Naive thymus-derived CD4-positive, alpha-beta T cell (primary cell): ENCODE measurements at regions of chr15 and their contacts with region 1.

Region 1: GRCh38 chr15:76235186-76235826 is 76.0 kb downstream of the ETFA start:
- DNase-seq: peak in 6 of 9 donors; percentile 4 to 49 (median 28)
- ATAC-seq: peak; percentile 54
- H3K4me3 ChIP-seq: no peak overlapping the region
- H3K4me3 Mint-ChIP-seq: no peak overlapping the region
- H3K27ac ChIP-seq: no peak overlapping the region
- H3K27ac Mint-ChIP-seq: no peak overlapping the region
- H3K4me1 ChIP-seq: no peaks in the 10 kb centered on the region
- H3K4me1 Mint-ChIP-seq: peaks cover 0 to 3% (median 0%) of the 10 kb centered on the region in 7 donors
- H3K27me3 ChIP-seq: no peaks in the 10 kb centered on the region
- H3K27me3 Mint-ChIP-seq: no peaks in the 10 kb centered on the region

Region 2: DNA sequence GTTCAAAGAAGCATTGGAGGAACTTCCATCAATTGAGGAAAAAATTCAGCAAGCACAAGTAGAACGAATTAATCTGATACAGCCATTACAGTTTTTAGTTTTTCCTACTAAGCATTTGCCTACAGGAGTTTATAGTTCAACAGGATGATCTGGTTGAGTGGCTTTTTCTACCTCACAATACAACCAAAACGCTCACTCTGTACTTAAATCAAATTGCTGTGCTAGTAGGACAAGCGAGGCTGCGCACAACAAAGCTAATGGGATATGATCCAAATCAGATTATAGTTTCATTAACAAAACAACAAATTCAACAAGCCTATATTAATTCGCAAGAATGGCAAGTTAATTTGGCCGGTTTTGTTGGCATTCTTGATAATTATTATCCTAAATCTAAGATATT is 31.8 kb after region 1 on chr15:
- CTCF ChIA-PET with region 1: no interaction called
- POLR2A ChIA-PET with region 1: no interaction called
- intact Hi-C with region 1: no loop called
- DNase-seq: no peak
- ATAC-seq: no peak
- H3K4me3 ChIP-seq: no peak overlapping the region
- H3K4me3 Mint-ChIP-seq: no peak overlapping the region
- H3K27ac ChIP-seq: no peak overlapping the region
- H3K27ac Mint-ChIP-seq: no peak overlapping the region
- H3K4me1 ChIP-seq: no peaks in the 10 kb centered on the region
- H3K4me1 Mint-ChIP-seq: peaks cover 0 to 4% (median 0%) of the 10 kb centered on the region in 7 donors
- H3K27me3 ChIP-seq: no peaks in the 10 kb centered on the region
- H3K27me3 Mint-ChIP-seq: no peaks in the 10 kb centered on the region

Region 3: GRCh38 chr15:76285239-76285825 is 50.0 kb after region 1 on chr15:
- CTCF ChIA-PET with region 1: no interaction called
- POLR2A ChIA-PET with region 1: no interaction called
- intact Hi-C with region 1: loop called in 1 of 2 experiments (anchors 5 kb)
- DNase-seq: peak in 2 of 9 donors; percentile 2 to 9
- ATAC-seq: no peak
- H3K4me3 ChIP-seq: no peak overlapping the region
- H3K4me3 Mint-ChIP-seq: peak overlapping the region in 2 of 10 donors; percentile 69 to 82
- H3K27ac ChIP-seq: peak overlapping the region; percentile 69
- H3K27ac Mint-ChIP-seq: peak overlapping the region in 2 of 9 donors; percentile 93 to 94
- H3K4me1 ChIP-seq: peaks cover 11 to 27% of the 10 kb centered on the region in 2 donors
- H3K4me1 Mint-ChIP-seq: peaks cover 13 to 42% (median 31%) of the 10 kb centered on the region in 7 donors
- H3K27me3 ChIP-seq: no peaks in the 10 kb centered on the region
- H3K27me3 Mint-ChIP-seq: no peaks in the 10 kb centered on the region

Region 4: GRCh38 chr15:76336254-76337058 is 101.2 kb after region 1 on chr15 and contains the start of gene ISL2:
- CTCF ChIA-PET with region 1: no interaction called
- POLR2A ChIA-PET with region 1: no interaction called
- intact Hi-C with region 1: loop called in 1 of 2 experiments (anchors 5 kb)
- DNase-seq: peak in 2 of 9 donors; percentile 21 to 83
- ATAC-seq: peak; percentile 52
- H3K4me3 ChIP-seq: peak within 1 kb of the TSS; percentile 28
- H3K4me3 Mint-ChIP-seq: peak within 1 kb of the TSS; percentile 61 to 84 (median 76)
- H3K27ac ChIP-seq: no peak within 1 kb of the TSS
- H3K27ac Mint-ChIP-seq: peak within 1 kb of the TSS in 5 of 9 donors; percentile 5 to 77 (median 39)
- H3K4me1 ChIP-seq: peaks cover 32 to 59% of the 10 kb centered on the region in 2 donors
- H3K4me1 Mint-ChIP-seq: peaks cover 37 to 60% (median 48%) of the 10 kb centered on the region in 7 donors
- H3K27me3 ChIP-seq: peaks cover 11 to 47% of the 10 kb centered on the region in 2 donors
- H3K27me3 Mint-ChIP-seq: peaks cover 73 to 84% (median 75%) of the 10 kb centered on the region in 5 donors
- total RNA-seq, gene ISL2: 0.21 to 0.51 (median 0.27) TPM in 3 of 5 experiments, not detected in the others

Region 5: GRCh38 chr15:76840830-76841460 is 605.6 kb after region 1 on chr15:
- CTCF ChIA-PET with region 1: no interaction called
- POLR2A ChIA-PET with region 1: no interaction called
- intact Hi-C with region 1: loop called in 1 of 2 experiments (anchors 1 kb)
- DNase-seq: peak in 2 of 9 donors; percentile 1 to 11
- ATAC-seq: no peak
- H3K4me3 ChIP-seq: no peak overlapping the region
- H3K4me3 Mint-ChIP-seq: no peak overlapping the region
- H3K27ac ChIP-seq: no peak overlapping the region
- H3K27ac Mint-ChIP-seq: peak overlapping the region in 1 of 9 donors; percentile 17
- H3K4me1 ChIP-seq: no peaks in the 10 kb centered on the region
- H3K4me1 Mint-ChIP-seq: peaks cover 4 to 36% (median 28%) of the 10 kb centered on the region in 7 donors
- H3K27me3 ChIP-seq: no peaks in the 10 kb centered on the region
- H3K27me3 Mint-ChIP-seq: no peaks in the 10 kb centered on the region

Region 6: GRCh38 chr15:76866716-76867321 is 631.5 kb after region 1 on chr15:
- CTCF ChIA-PET with region 1: no interaction called
- POLR2A ChIA-PET with region 1: no interaction called
- intact Hi-C with region 1: loop called (anchors 1 to 2 kb)
- DNase-seq: peak in 4 of 9 donors; percentile 6 to 22 (median 13)
- ATAC-seq: no peak
- H3K4me3 ChIP-seq: no peak overlapping the region
- H3K4me3 Mint-ChIP-seq: no peak overlapping the region
- H3K27ac ChIP-seq: no peak overlapping the region
- H3K27ac Mint-ChIP-seq: no peak overlapping the region
- H3K4me1 ChIP-seq: no peaks in the 10 kb centered on the region
- H3K4me1 Mint-ChIP-seq: peaks cover 18 to 73% (median 50%) of the 10 kb centered on the region in 7 donors
- H3K27me3 ChIP-seq: no peaks in the 10 kb centered on the region
- H3K27me3 Mint-ChIP-seq: no peaks in the 10 kb centered on the region

Region 7: GRCh38 chr15:76931397-76932007 is 696.2 kb after region 1 on chr15 and contains the start of gene RCN2:
- CTCF ChIA-PET with region 1: no interaction called
- POLR2A ChIA-PET with region 1: no interaction called
- intact Hi-C with region 1: loop called in 1 of 2 experiments (anchors 10 kb)
- DNase-seq: peak; percentile 81 to 95 (median 88)
- ATAC-seq: peak; percentile 99
- H3K4me3 ChIP-seq: peak within 1 kb of the TSS; percentile 70
- H3K4me3 Mint-ChIP-seq: peak within 1 kb of the TSS; percentile 89 to 95 (median 92)
- H3K27ac ChIP-seq: peak within 1 kb of the TSS; percentile 73
- H3K27ac Mint-ChIP-seq: peak within 1 kb of the TSS; percentile 76 to 96 (median 91)
- H3K4me1 ChIP-seq: peaks cover 4 to 14% of the 10 kb centered on the region in 2 donors
- H3K4me1 Mint-ChIP-seq: peaks cover 19 to 42% (median 33%) of the 10 kb centered on the region in 7 donors
- H3K27me3 ChIP-seq: no peaks in the 10 kb centered on the region
- H3K27me3 Mint-ChIP-seq: peaks cover 0 to 20% (median 0%) of the 10 kb centered on the region in 5 donors
- total RNA-seq, gene RCN2: 16.7 to 30.5 (median 28.1) TPM

Region 8: GRCh38 chr15:77059786-77060361 is 824.6 kb after region 1 on chr15:
- CTCF ChIA-PET with region 1: no interaction called
- POLR2A ChIA-PET with region 1: no interaction called
- intact Hi-C with region 1: no loop called
- DNase-seq: no peak
- ATAC-seq: no peak
- H3K4me3 ChIP-seq: no peak overlapping the region
- H3K4me3 Mint-ChIP-seq: peak overlapping the region in 1 of 10 donors; percentile 5
- H3K27ac ChIP-seq: no peak overlapping the region
- H3K27ac Mint-ChIP-seq: peak overlapping the region in 4 of 9 donors; percentile 10 to 50 (median 40)
- H3K4me1 ChIP-seq: peaks cover 0 to 3% of the 10 kb centered on the region in 2 donors
- H3K4me1 Mint-ChIP-seq: peaks cover 18 to 46% (median 28%) of the 10 kb centered on the region in 7 donors
- H3K27me3 ChIP-seq: no peaks in the 10 kb centered on the region
- H3K27me3 Mint-ChIP-seq: no peaks in the 10 kb centered on the region